OCI-LY7 (cell line): ENCODE measurements at regions of chr5 and their contacts with region 1.

Region 1: DNA sequence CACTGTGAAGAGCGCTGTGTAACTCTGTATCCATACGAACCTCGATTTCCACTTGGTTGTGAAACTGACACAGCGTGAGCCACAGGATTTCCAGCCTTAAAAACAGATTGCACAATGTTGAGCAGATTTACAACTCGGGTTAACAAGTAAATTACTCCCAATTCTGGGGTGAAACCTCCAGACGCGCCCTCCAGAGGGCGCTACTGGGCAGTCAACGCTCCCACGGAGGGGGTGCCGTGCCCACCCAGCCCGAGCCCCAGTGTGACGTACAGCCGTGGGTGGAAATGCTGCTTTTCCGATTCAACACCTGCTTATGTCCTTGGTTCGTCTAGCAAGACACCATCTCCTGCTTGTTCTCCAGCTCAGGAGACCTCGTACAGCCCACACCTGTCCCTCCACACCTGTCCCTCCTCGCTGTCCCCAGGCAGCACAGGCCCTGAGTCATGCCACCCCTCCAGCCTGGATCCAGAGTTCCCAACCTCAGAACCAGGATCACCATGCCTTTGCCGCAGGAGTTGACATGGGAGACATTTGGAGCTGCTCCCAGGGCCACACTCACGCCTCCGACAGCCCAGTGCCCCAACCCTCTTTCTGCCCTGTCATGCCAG is 34.4 kb upstream of the SLC6A3 start:
- DNase-seq: peak; percentile 65
- H3K4me3 ChIP-seq: no peak overlapping the region
- H3K27ac ChIP-seq: no peak overlapping the region
- H3K4me1 ChIP-seq: peaks cover 31% of the 10 kb centered on the region
- CTCF ChIP-seq: peak; percentile 92

Region 2: GRCh38 chr5:1420211-1421195 is 59.2 kb before region 1 on chr5:
- CTCF ChIA-PET with region 1: no interaction called
- POLR2A ChIA-PET with region 1: no interaction called
- intact Hi-C with region 1: no loop called
- DNase-seq: no peak
- H3K4me3 ChIP-seq: no peak overlapping the region
- H3K27ac ChIP-seq: no peak overlapping the region
- H3K4me1 ChIP-seq: no peaks in the 10 kb centered on the region
- CTCF ChIP-seq: no peak

Region 3: GRCh38 chr5:1536322-1536845 is 56.7 kb after region 1 on chr5:
- CTCF ChIA-PET with region 1: no interaction called
- POLR2A ChIA-PET with region 1: no interaction called
- intact Hi-C with region 1: loop called (anchors 1 kb)
- DNase-seq: peak; percentile 58
- H3K4me3 ChIP-seq: peak overlapping the region; percentile 64
- H3K27ac ChIP-seq: peak overlapping the region; percentile 52
- H3K4me1 ChIP-seq: peaks cover 43% of the 10 kb centered on the region
- CTCF ChIP-seq: no peak

Region 4: DNA sequence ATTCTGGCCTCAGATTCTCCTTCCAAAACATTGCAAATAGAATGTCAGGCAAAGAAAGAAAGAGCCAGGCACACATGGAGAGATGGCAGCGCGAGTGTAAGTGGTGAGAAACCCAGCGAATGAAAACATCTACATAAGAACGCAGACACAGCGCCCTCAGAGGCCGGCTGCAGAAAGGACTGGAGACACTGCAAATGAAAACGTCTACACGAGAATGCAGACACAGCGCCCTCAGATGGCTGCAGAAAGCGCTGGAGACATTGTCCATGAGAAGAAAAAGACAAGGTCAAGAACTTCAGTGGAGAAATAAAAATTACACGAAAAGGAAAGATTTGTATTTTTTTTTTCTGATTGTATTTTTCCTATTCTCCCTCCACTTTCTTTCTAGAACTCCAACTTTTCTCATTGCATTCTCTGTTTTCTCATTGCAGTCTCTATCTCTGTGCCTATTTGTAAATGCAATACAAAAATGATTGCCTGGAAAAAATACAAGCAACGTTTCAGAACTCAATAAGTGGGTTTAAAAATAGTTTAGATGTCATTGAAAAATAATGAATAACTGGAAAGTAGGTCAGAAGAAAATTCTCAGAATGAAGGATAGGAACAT is 162.0 kb after region 1 on chr5:
- CTCF ChIA-PET with region 1: interaction called, 3 read pairs
- POLR2A ChIA-PET with region 1: no interaction called
- intact Hi-C with region 1: loop called (anchors 1 kb)
- DNase-seq: peak; percentile 90
- H3K4me3 ChIP-seq: no peak overlapping the region
- H3K27ac ChIP-seq: no peak overlapping the region
- H3K4me1 ChIP-seq: peaks cover 8% of the 10 kb centered on the region
- CTCF ChIP-seq: peak; percentile 100